ENCODE measurements at regions of chr12 and their contacts with region 1.

Region 1: DNA sequence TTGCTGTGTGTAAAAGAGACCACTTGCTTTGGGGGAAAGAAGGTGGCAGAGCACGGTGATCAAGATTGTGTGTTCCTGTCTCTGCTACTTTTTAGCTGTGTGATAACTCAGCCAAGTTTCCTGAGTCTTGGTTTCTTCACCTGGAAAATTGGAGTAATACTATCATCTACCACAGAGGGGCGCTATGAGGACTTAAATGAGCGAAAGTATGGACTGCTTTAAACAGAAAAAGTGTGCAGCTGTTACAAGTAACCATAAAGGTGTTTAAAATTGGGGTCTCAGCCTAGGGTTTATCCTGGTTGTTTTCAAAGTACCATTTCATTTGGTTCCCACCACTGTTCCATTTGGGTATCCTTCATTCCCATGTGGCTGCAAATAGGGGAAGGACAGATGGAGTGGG is 65.9 kb upstream of the WSCD2 start:
- DNase-seq: peak; percentile 35
- ATAC-seq: peak; percentile 61; the same call in 1 of the 2 replicates
- H3K4me3 ChIP-seq: no peak overlapping the region
- H3K27ac ChIP-seq: no peak overlapping the region
- H3K4me1 ChIP-seq: peaks cover 3 to 7% of the 10 kb centered on the region in 2 experiments; a peak in 1 of 4 replicates
- H3K27me3 ChIP-seq: peaks cover 26% of the 10 kb centered on the region
- CTCF ChIP-seq: peak; percentile 59 to 76 (median 65); a peak in 5 of 6 replicates
- POLR2A ChIP-seq: no peak
- RAD21 ChIP-seq: peak; percentile 72

Region 2: DNA sequence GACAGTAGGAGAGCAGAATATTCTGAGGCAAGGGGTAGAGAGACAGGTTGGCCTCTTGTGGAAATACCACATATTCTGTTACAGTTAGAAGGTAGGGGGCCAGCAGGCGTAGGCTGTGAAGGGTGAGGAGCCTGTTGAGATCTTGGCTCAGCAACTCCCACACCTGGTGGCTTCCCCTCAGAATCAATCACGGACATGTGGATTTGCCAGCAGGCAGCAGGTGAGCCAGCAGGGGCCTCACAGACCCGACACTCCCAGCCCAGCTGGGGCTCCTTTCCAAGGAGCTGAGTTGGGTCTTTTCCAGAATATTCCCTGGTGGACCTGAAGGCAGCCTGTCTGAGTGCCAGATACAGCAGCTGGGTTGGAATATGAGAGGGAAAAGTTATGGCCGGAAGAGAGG is 819.9 kb before region 1 on chr12:
- CTCF ChIA-PET with region 1: no interaction called
- POLR2A ChIA-PET with region 1: no interaction called
- RAD21 ChIA-PET with region 1: no interaction called
- intact Hi-C with region 1: no loop called
- DNase-seq: no peak
- ATAC-seq: no peak
- H3K4me3 ChIP-seq: no peak overlapping the region
- H3K27ac ChIP-seq: no peak overlapping the region
- H3K4me1 ChIP-seq: no peaks in the 10 kb centered on the region
- H3K27me3 ChIP-seq: peaks cover 3% of the 10 kb centered on the region; the same call in 1 of the 2 replicates
- CTCF ChIP-seq: no peak
- POLR2A ChIP-seq: no peak
- RAD21 ChIP-seq: no peak

Region 3: DNA sequence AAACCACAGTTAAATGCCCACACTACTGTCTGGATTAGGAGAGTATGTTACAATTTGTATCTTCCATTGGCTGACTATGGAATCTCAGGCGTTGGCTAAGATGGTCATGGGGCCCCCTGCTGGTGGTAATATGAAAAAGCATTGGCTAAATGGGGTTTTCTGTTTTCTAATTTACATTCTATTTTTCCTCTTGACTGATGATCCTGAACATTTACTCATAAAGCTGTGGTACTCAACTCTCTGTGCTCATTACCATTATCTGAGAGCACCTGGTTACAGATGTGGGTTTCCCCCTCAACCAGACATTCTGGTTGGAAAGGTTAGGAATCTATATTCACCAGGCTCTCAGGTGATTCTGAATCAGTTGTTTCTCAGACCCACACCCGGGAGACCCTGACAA is 130.7 kb after region 1 on chr12:
- CTCF ChIA-PET with region 1: interaction called, 3 read pairs
- POLR2A ChIA-PET with region 1: no interaction called
- RAD21 ChIA-PET with region 1: no interaction called
- intact Hi-C with region 1: loop called (anchors 2 kb)
- DNase-seq: peak; percentile 2
- ATAC-seq: no peak
- H3K4me3 ChIP-seq: no peak overlapping the region
- H3K27ac ChIP-seq: no peak overlapping the region
- H3K4me1 ChIP-seq: no peaks in the 10 kb centered on the region
- H3K27me3 ChIP-seq: peaks cover 26% of the 10 kb centered on the region
- CTCF ChIP-seq: peak; percentile 59 to 84 (median 72); a peak in 5 of 6 replicates
- POLR2A ChIP-seq: no peak
- RAD21 ChIP-seq: peak; percentile 62

Region 4: GRCh38 chr12:108237272-108237671 is 174.1 kb after region 1 on chr12:
- CTCF ChIA-PET with region 1: interaction called, 4 read pairs
- POLR2A ChIA-PET with region 1: no interaction called
- RAD21 ChIA-PET with region 1: no interaction called
- intact Hi-C with region 1: loop called (anchors 2 kb)
- DNase-seq: peak; percentile 40
- ATAC-seq: peak; percentile 96
- H3K4me3 ChIP-seq: no peak overlapping the region
- H3K27ac ChIP-seq: no peak overlapping the region
- H3K4me1 ChIP-seq: peaks cover 0 to 3% of the 10 kb centered on the region in 2 experiments; a peak in 1 of 4 replicates
- H3K27me3 ChIP-seq: peaks cover 48% of the 10 kb centered on the region
- CTCF ChIP-seq: peak; percentile 44 to 86 (median 79); a peak in 5 of 6 replicates
- POLR2A ChIP-seq: no peak
- RAD21 ChIP-seq: peak; percentile 67

Region 5: DNA sequence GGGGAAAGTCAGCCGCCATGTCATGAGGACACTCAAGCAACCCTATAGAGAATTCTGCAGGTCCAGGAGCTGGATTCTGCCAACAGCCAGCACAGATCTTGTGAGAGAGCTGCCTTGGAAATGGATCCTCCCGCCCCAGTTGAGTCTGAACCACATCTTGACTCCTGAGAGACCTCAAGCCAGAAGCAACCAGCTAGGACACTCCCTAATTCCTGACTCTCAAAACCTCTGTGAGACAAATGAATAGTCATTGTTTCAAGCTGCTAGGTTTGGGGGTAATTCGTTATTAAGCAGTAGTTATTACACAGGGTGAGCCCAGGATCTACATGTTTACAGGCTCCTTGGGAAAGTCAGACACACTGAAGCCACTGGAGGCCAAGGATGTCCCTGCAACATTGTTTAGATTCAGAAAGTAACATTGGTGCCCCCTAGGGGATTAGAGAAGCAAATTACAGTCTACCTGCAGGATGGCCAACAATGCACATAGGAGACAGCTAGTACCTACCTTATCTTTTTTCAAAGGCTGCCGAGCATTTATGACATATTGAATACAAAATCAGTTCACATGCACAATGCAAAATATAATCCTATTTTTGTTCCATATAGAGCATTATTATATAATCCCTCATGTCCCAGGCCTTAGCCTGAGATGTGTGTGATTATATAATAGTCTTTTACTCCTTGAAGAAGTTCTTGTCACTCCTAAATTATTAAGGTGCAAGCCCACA is 394.0 kb after region 1 on chr12:
- CTCF ChIA-PET with region 1: no interaction called
- POLR2A ChIA-PET with region 1: no interaction called
- RAD21 ChIA-PET with region 1: interaction called in 1 of 2 experiments, 10 read pairs
- intact Hi-C with region 1: no loop called
- DNase-seq: peak; percentile 33
- ATAC-seq: peak; percentile 98
- H3K4me3 ChIP-seq: no peak overlapping the region
- H3K27ac ChIP-seq: no peak overlapping the region
- H3K4me1 ChIP-seq: no peaks in the 10 kb centered on the region
- H3K27me3 ChIP-seq: peaks cover 65% of the 10 kb centered on the region
- CTCF ChIP-seq: peak; percentile 66 to 70 (median 68)
- POLR2A ChIP-seq: no peak
- RAD21 ChIP-seq: peak; percentile 74

Region 6: DNA sequence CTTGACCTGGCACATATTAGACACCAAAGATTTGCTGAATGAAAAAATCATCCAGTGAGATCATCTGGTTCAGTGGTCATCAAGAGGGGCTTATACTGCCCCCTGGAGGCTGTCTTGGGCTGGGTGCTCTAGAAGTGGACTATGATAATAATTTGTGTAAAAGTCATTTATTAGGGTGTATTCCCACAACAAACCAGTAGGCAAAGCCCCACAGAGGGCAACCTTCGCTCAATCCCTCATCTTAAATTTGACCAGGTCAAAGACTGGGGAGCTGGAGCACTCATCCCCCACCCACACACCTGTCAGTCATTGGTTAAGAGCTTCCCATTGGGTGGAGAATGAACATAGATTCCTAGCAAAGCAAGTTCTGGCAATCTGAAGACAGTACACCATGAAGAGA is 431.9 kb after region 1 on chr12:
- CTCF ChIA-PET with region 1: interaction called, 3 read pairs
- POLR2A ChIA-PET with region 1: no interaction called
- RAD21 ChIA-PET with region 1: no interaction called
- intact Hi-C with region 1: loop called (anchors 10 kb)
- DNase-seq: peak; percentile 51
- ATAC-seq: peak; percentile 91
- H3K4me3 ChIP-seq: no peak overlapping the region
- H3K27ac ChIP-seq: no peak overlapping the region
- H3K4me1 ChIP-seq: no peaks in the 10 kb centered on the region
- H3K27me3 ChIP-seq: peaks cover 54% of the 10 kb centered on the region
- CTCF ChIP-seq: peak; percentile 67 to 95 (median 91); a peak in 5 of 6 replicates
- POLR2A ChIP-seq: no peak
- RAD21 ChIP-seq: peak; percentile 69

Region 7: DNA sequence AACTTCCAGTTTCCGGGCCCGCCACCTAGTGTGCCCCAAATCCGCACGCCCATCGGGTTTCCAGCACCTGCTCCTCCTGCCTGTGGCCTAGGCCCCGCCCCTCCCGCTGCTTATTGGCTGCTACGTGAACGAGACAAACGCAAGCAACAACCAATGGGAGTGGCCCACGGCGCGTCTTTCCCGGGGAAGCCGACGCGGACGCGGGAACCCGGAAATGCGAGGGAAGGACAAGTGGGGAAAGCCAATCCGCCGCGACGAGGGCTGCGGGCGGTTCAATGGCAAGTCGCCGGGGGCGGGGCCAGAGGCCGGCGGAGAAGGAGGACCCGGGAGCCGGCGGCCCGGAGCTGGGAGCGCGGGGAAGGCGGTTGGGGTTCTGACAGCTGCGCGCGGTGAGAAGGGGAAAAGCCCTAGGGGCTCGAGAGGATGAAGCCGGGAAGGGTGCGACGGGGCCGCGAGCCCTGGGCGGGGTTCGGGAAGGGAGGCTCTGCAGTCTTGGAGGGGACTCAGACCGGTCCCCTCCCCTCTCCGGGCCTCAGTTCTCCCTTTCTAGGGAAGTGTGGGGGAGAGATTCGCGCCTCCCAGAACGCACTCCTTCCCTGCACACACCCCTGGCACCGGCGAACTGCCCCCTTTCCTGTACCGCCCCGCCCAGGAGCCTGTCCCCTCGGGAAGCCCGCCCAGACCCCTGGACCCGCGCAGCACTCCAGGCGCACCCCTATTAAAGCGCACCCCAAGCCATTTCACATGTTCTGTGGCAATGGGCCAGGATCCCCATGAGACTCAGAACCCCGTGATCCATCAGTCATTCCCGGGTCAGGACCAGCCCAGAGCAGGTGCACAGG is 452.0 kb after region 1 on chr12 and contains the start of gene FICD:
- CTCF ChIA-PET with region 1: interaction called, 7 read pairs
- POLR2A ChIA-PET with region 1: no interaction called
- RAD21 ChIA-PET with region 1: no interaction called
- intact Hi-C with region 1: loop called (anchors 2 kb)
- DNase-seq: peak; percentile 96
- ATAC-seq: peak; percentile 90
- H3K4me3 ChIP-seq: peak within 1 kb of the TSS; percentile 89 to 94
- H3K27ac ChIP-seq: peak within 1 kb of the TSS; percentile 42; the same call in 1 of the 2 replicates
- H3K4me1 ChIP-seq: peaks cover 3 to 19% of the 10 kb centered on the region in 2 experiments; a peak in 2 of 4 replicates
- H3K27me3 ChIP-seq: no peaks in the 10 kb centered on the region
- CTCF ChIP-seq: no peak
- POLR2A ChIP-seq: no peak
- RAD21 ChIP-seq: no peak
- total RNA-seq, gene FICD: 5.1 TPM

Measured in HCT116 (cell line).